Endothelial cell of umbilical vein (primary cell): ENCODE measurements at regions of chr11 and their contacts with region 1.

Region 1: DNA sequence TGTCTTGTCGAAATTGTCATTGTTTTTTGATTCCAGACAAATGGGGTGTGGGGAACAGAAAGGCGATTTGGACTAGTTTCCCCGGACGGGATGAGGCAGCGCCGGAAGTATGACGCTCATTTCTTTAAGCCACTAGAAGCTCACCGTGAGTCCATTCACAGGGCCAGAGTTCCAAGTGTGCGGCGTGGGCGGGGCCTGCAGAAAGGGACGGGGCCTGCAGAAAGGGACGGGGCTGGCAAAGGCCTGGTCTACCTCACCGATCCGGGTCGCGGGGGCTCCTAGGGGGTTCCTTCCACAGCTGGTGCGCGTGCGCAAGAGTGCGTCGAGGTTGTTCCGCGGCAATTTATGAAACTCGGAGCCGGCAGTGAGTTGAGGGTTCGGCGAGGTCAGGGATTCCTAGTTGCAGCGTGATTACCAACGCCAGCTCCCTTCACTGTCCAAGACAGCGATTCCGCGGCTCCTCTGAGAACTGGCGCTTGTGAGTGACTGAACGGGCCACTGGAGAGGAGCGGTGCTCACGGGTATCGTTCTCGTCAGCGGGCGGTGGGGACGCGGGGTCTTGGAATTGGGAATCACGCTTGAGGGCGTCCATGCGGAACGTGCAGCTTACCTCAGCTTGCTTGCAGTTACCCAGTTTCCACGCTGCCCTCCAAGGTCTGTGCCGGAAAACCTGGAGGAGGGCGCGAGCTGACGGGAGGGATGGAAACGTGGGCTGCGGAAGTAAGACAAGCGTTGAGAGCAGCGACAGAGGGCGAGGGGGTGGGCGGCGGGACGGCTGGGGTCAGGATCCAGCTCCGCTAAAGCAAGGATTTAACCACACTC is at the start of gene ZNF215:
- DNase-seq: peak; percentile 74
- H3K4me3 ChIP-seq: peak within 1 kb of the TSS; percentile 43 to 94 (median 88)
- H3K27ac ChIP-seq: peak within 1 kb of the TSS; percentile 57
- H3K4me1 ChIP-seq: peaks cover 13% of the 10 kb centered on the region
- H3K27me3 ChIP-seq: no peaks in the 10 kb centered on the region
- CTCF ChIP-seq: no peak
- POLR2A ChIP-seq: no peak
- total RNA-seq, gene ZNF215: 2.9 and 6.0 TPM in 2 replicates

Region 2: GRCh38 chr11:6992457-6993417 is 66.3 kb after region 1 on chr11:
- CTCF ChIA-PET with region 1: no interaction called
- POLR2A ChIA-PET with region 1: no interaction called
- dilution Hi-C with region 1: no loop called
- intact Hi-C with region 1: loop called (anchors 5 kb)
- DNase-seq: peak; percentile 67
- H3K4me3 ChIP-seq: no peak overlapping the region
- H3K27ac ChIP-seq: no peak overlapping the region
- H3K4me1 ChIP-seq: no peaks in the 10 kb centered on the region
- H3K27me3 ChIP-seq: no peaks in the 10 kb centered on the region
- CTCF ChIP-seq: no peak
- POLR2A ChIP-seq: no peak

Region 3: GRCh38 chr11:7056828-7057513 is 130.6 kb after region 1 on chr11:
- CTCF ChIA-PET with region 1: no interaction called
- POLR2A ChIA-PET with region 1: no interaction called
- dilution Hi-C with region 1: no loop called
- intact Hi-C with region 1: loop called (anchors 1 kb)
- DNase-seq: peak; percentile 64
- H3K4me3 ChIP-seq: no peak overlapping the region
- H3K27ac ChIP-seq: peak overlapping the region; percentile 81
- H3K4me1 ChIP-seq: peaks cover 31% of the 10 kb centered on the region
- H3K27me3 ChIP-seq: no peaks in the 10 kb centered on the region
- CTCF ChIP-seq: no peak
- POLR2A ChIP-seq: no peak

Region 4: GRCh38 chr11:7196396-7197146 is 270.2 kb after region 1 on chr11:
- CTCF ChIA-PET with region 1: no interaction called
- POLR2A ChIA-PET with region 1: no interaction called
- dilution Hi-C with region 1: no loop called
- intact Hi-C with region 1: no loop called
- DNase-seq: no peak
- H3K4me3 ChIP-seq: no peak overlapping the region
- H3K27ac ChIP-seq: no peak overlapping the region
- H3K4me1 ChIP-seq: no peaks in the 10 kb centered on the region
- H3K27me3 ChIP-seq: peaks cover 0 to 2% of the 10 kb centered on the region in 2 experiments
- CTCF ChIP-seq: no peak
- POLR2A ChIP-seq: no peak

Region 5: DNA sequence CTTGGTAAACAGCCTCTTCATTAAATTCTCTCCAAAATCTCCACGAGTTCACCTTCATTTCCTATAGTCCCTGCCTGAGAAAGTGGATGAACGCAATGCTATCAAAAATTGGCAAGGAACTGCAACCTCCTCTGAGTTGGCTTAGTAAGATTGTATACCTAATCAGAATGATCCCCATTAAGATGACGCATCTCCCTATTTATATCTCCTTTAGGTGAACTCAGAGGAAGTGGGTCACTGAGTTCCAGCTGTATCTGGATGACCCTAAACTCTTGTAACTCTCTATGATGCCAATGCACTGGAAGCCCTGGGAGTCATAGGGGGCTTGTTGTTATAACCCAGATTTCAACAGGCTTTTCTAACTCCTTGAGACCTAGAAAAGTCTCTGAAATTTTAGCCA is 956.4 kb after region 1 on chr11:
- CTCF ChIA-PET with region 1: no interaction called
- POLR2A ChIA-PET with region 1: no interaction called
- dilution Hi-C with region 1: no loop called
- intact Hi-C with region 1: no loop called
- DNase-seq: no peak
- H3K4me3 ChIP-seq: no peak overlapping the region
- H3K27ac ChIP-seq: no peak overlapping the region
- H3K4me1 ChIP-seq: no peaks in the 10 kb centered on the region
- H3K27me3 ChIP-seq: peaks cover 0 to 1% of the 10 kb centered on the region in 2 experiments
- CTCF ChIP-seq: no peak
- POLR2A ChIP-seq: no peak